ENCODE measurements at regions of chr18 and their contacts with region 1.

Region 1: DNA sequence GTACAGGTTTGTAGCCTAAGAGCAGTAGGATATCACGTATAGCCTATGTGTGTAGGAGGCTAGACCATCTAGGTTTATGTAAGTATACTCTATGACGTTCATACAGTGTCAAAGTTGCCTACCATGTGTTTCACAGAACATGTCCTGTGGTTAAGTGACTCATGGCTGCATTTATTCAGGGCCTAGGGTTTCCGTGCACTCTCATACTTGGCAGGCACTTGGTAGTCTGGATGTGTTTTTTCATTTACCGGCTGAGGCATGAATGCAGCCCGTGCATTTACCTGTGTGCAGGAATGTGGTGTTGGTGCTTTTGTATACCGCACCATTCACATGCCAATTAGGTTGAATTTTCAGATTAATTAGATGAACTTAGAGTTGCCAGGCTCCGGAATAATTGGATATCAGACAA is 43.4 kb downstream of the MYL12B start:
- DNase-seq: peak; percentile 77
- H3K4me3 Mint-ChIP-seq: no peak overlapping the region
- H3K27ac Mint-ChIP-seq: peak overlapping the region; percentile 80
- H3K4me1 Mint-ChIP-seq: peaks cover 21% of the 10 kb centered on the region
- H3K27me3 Mint-ChIP-seq: peaks cover 15% of the 10 kb centered on the region

Region 2: GRCh38 chr18:2354292-2354691 is 951.1 kb before region 1 on chr18:
- CTCF ChIA-PET with region 1: no interaction called
- POLR2A ChIA-PET with region 1: no interaction called
- intact Hi-C with region 1: no loop called
- DNase-seq: no peak
- H3K4me3 Mint-ChIP-seq: no peak overlapping the region
- H3K27ac Mint-ChIP-seq: no peak overlapping the region
- H3K4me1 Mint-ChIP-seq: no peaks in the 10 kb centered on the region
- H3K27me3 Mint-ChIP-seq: peaks cover 7% of the 10 kb centered on the region

Region 3: DNA sequence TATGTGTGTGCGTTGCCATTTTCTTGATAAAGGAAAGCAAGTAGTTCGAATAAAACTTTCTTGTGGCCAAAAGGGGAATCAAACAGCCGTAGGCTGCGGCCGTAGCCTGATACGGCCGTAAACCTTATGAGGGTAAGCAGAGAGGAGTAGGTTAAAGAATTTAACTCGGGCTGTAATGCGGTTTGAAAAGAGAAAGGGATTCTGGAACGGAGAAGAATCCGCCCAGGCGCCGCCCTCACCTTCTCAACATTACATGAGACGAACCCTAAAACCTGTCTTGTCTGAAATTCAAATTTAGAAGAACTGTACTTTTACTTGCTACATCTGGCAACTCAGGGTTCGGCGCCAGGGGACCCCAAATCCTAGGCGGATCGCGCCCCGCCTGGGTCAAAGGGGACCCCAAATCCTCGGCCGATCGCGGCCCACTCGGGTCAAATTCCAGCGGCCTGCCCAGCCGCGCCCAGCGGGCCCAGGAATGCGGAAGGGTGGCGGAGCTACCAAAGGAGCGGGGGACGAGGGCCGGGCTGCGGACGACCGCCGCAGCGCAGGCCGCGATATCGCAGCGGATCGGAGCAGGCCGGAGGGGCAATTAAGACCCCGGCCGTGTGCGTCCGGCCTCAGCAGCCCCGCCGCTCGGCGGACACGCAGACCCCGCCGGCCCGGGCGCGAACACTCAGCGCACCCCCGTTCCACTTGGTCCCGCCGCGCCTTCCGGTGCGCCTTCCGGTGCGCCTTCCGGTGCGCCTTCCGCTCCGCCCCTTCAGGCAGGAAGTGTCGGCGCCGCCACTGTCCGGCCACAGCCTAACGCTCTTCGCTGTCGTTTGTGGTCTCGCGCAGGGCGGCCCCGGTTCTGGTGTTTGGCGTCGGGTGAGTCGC is 43.7 kb before region 1 on chr18 and contains the start of gene MYL12B:
- CTCF ChIA-PET with region 1: no interaction called
- POLR2A ChIA-PET with region 1: no interaction called
- intact Hi-C with region 1: loop called (anchors 2 kb)
- DNase-seq: peak; percentile 85
- H3K4me3 Mint-ChIP-seq: peak within 1 kb of the TSS; percentile 89
- H3K27ac Mint-ChIP-seq: peak within 1 kb of the TSS; percentile 95
- H3K4me1 Mint-ChIP-seq: peaks cover 62% of the 10 kb centered on the region
- H3K27me3 Mint-ChIP-seq: no peaks in the 10 kb centered on the region
- total RNA-seq, gene MYL12B: 335 to 339 TPM

Region 4: GRCh38 chr18:3321133-3321812 is 15.9 kb after region 1 on chr18:
- CTCF ChIA-PET with region 1: interaction called, 4 read pairs
- POLR2A ChIA-PET with region 1: interaction called, 3 read pairs
- intact Hi-C with region 1: loop called (anchors 1 kb)
- DNase-seq: peak; percentile 56
- H3K4me3 Mint-ChIP-seq: no peak overlapping the region
- H3K27ac Mint-ChIP-seq: no peak overlapping the region
- H3K4me1 Mint-ChIP-seq: peaks cover 32% of the 10 kb centered on the region
- H3K27me3 Mint-ChIP-seq: peaks cover 7% of the 10 kb centered on the region

Region 5: DNA sequence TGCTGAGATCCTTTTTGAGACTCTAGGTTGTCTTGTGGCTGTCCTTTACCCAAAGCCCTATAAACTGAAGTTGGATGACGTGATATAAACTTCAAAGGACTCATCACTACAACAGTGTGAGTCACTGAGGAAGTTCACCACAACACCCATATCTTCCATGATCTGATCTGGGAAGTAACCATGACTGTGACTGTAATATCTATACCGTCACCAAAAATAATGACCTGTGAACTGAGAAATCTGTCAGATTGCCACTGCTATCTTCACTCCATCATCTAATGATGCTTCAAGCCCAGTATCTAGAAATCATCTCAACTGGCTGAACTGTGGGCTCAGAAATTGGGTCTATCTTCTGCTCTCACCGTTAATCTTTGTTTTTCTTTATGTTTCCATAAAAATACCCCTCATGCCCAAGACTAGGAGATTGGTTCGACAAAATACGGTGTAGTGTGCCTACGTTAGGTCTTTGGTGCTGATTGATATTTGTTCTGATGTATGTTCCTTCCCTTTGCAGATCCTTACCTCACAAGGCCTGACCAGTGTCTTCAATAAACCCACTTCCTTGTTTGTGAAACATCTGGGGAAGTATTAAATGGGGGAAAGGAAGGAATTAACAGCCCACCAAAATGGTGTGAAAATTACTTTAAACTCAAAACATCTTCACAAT is 34.8 kb after region 1 on chr18:
- CTCF ChIA-PET with region 1: no interaction called
- POLR2A ChIA-PET with region 1: no interaction called
- intact Hi-C with region 1: loop called (anchors 1 kb)
- DNase-seq: no peak
- H3K4me3 Mint-ChIP-seq: no peak overlapping the region
- H3K27ac Mint-ChIP-seq: peak overlapping the region; percentile 1
- H3K4me1 Mint-ChIP-seq: peaks cover 16% of the 10 kb centered on the region
- H3K27me3 Mint-ChIP-seq: no peaks in the 10 kb centered on the region

Region 6: DNA sequence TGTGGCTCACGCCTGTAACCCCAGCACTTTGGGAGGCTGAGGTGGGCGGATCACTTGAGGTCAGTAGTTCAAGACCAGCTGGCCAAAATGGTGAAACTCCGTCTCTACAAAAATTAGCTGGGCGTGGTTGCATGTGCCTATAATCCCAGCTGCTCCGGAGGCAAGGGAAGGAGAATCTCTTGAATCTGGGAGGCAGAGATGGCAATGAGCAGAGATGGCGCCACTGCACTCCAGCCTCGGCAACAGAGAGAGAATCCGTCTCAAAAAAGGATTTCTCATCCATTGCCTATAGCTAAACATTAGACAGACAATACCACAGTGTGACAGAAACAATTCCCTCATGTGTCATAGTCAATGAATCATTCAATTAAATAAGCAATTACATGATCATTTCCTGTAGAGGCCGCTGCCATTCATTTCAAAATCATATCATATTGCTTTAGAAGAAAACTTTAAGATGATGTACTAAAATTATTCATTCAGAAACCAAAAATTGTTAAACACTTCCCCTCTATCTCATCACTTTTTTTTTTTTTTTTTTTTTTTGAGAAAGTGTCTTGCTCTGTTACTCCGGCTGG is 75.1 kb after region 1 on chr18:
- CTCF ChIA-PET with region 1: no interaction called
- POLR2A ChIA-PET with region 1: no interaction called
- intact Hi-C with region 1: loop called (anchors 1 kb)
- DNase-seq: peak; percentile 57
- H3K4me3 Mint-ChIP-seq: no peak overlapping the region
- H3K27ac Mint-ChIP-seq: no peak overlapping the region
- H3K4me1 Mint-ChIP-seq: peaks cover 9% of the 10 kb centered on the region
- H3K27me3 Mint-ChIP-seq: peaks cover 13% of the 10 kb centered on the region

Region 7: DNA sequence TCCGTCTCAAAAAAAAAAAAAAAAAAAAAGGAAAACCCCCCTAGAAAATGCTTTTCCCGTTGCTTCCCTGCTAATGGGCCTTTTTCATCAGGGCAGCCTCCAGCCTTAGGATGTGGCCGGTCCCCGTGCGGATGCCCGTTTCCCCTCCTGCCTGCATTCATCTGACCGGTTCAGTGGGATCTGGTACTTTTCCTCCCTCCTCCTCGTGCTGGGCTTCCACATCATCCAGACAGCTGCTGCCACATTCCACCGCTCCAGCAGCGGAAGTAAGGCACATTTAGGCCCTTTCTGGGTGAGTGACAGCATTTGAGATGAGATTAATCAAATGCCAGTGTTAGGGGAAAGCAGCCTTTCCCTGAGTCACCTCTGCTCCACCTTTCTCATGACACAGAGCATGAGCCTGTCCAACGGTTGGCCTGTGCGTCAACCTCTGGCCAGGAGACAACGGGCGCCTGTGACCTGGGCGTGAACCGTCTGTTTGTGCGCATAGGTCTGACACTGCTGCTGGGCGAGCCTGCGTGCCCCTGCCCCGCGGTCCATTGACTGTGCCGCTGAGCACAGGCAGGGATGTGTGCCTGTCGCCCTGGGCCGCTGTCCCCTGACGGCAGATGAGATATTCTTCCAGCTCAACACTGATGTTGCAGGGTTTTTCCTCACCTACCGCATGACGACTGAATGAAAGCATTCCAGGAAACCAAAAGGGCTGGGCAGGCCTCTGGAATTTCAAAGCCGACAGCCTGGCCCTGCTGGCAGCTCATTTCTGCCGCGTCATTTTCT is 318.6 kb after region 1 on chr18:
- CTCF ChIA-PET with region 1: no interaction called
- POLR2A ChIA-PET with region 1: no interaction called
- intact Hi-C with region 1: loop called (anchors 1 kb)
- DNase-seq: peak; percentile 64
- H3K4me3 Mint-ChIP-seq: peak overlapping the region; percentile 58
- H3K27ac Mint-ChIP-seq: peak overlapping the region; percentile 88
- H3K4me1 Mint-ChIP-seq: peaks cover 40% of the 10 kb centered on the region
- H3K27me3 Mint-ChIP-seq: no peaks in the 10 kb centered on the region

Measured in activated CD4-positive, alpha-beta memory T cell treated with anti-CD3 and anti-CD28 coated beads for 36 hours (primary cell).